Heart right ventricle (tissue), 16 donors: ENCODE measurements at regions of chr4 and their contacts with region 1.

Region 1: DNA sequence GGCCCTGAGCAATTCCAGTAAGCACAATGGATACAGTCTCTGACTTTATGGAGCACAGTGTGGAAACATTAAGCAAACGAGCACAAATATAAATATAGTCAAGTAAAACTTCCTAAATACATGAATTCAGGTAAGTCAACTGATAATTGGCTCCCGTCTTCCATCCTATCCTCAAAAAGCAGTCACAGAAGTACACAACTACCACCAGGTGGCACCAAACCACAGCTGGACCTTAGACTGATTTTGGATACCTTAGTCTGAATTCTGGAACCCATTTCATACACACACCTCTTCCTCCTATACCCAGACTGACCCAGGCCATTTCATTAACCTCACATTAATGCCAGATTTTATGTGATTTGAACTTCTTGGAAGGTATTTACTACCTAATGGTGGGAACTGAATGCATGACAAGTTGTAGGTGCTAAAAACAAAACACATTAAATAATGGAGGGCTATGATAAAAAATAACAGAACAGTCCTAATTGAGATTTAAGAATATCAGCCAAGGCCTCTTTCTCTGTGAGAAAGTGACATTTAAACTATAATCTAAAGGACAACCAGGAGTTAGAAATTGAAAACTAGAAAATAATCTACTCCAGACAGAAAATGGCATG is 77.5 kb downstream of the ELF2 start:
- DNase-seq: peak; percentile 19 to 73
- ATAC-seq: peak; percentile 50 to 89 (median 72)
- H3K4me3 ChIP-seq: no peak overlapping the region
- H3K27ac ChIP-seq: no peak overlapping the region
- H3K4me1 ChIP-seq: no peaks in the 10 kb centered on the region
- H3K27me3 ChIP-seq: no peaks in the 10 kb centered on the region
- CTCF ChIP-seq: peak; percentile 73 to 93 (median 87)

Region 2: DNA sequence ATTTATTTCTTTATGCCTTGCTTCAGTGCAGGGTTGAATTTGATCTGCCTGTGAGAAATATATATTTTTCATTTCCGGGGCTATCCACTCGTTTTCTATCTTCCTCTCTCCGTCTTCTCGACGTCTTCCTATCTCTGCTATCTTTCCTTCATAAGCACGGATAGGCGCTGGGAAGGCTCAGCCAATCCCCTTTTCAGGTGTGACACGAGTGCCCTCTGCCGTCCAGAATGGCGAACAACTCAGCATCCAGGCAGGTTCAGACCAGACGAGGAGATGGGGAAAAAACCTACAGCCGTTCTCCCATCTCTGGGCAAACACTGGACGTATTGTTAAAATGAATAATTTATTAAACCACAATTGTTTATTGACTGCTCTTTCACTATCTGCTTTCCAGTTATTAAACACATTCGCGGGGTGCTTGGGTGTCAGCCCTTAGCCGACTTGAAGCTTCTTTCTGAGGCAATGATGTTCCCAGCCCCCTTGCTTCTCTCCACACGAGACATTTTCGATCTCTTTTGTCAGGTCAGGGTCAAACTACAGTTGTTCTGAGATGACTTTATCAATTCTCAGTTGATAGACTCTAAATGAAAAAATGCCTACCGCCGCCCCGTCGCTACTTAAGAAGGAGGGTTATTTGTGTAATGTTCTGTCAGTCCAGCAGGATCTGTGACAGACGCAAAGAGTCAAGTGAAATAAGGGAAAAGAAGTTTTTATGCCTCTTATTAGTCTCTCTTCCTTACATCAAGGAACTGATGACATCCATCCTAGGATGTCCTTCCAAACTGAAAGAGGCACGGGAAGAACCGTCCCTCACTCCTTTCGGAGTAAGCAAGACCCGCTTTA is 180.2 kb before region 1 on chr4:
- intact Hi-C with region 1: loop called in 1 of 10 experiments (anchors 5 kb)
- DNase-seq: peak; percentile 60 to 76
- ATAC-seq: peak; percentile 42 to 95 (median 82)
- H3K4me3 ChIP-seq: peak overlapping the region in 2 of 10 donors; percentile 11 to 17
- H3K27ac ChIP-seq: no peak overlapping the region
- H3K4me1 ChIP-seq: peaks cover 0 to 11% (median 0%) of the 10 kb centered on the region in 9 donors
- H3K27me3 ChIP-seq: no peaks in the 10 kb centered on the region
- CTCF ChIP-seq: peak; percentile 52 to 85 (median 78)

Region 3: GRCh38 chr4:139050446-139050845 is 49.0 kb before region 1 on chr4:
- intact Hi-C with region 1: no loop called
- DNase-seq: no peak
- ATAC-seq: no peak
- H3K4me3 ChIP-seq: no peak overlapping the region
- H3K27ac ChIP-seq: peak overlapping the region in 1 of 10 donors; percentile 28
- H3K4me1 ChIP-seq: peaks cover 0 to 23% (median 14%) of the 10 kb centered on the region in 9 donors
- H3K27me3 ChIP-seq: no peaks in the 10 kb centered on the region
- CTCF ChIP-seq: no peak

Region 4: GRCh38 chr4:139167774-139168444 is 68.4 kb after region 1 on chr4:
- intact Hi-C with region 1: loop called in 7 of 10 experiments (anchors 5 to 10 kb)
- DNase-seq: no peak
- ATAC-seq: peak in 6 of 8 donors; percentile 18 to 81 (median 60)
- H3K4me3 ChIP-seq: no peak overlapping the region
- H3K27ac ChIP-seq: peak overlapping the region in 2 of 10 donors; percentile 30 to 54
- H3K4me1 ChIP-seq: peaks cover 10 to 77% (median 55%) of the 10 kb centered on the region in 9 donors
- H3K27me3 ChIP-seq: no peaks in the 10 kb centered on the region
- CTCF ChIP-seq: peak in 7 of 9 donors; percentile 34 to 58 (median 46)

Region 5: GRCh38 chr4:139229534-139230039 is 130.1 kb after region 1 on chr4:
- intact Hi-C with region 1: loop called in 2 of 10 experiments (anchors 2 to 5 kb)
- DNase-seq: peak in 1 of 2 donors; percentile 12
- ATAC-seq: peak in 5 of 8 donors; percentile 52 to 71 (median 62)
- H3K4me3 ChIP-seq: no peak overlapping the region
- H3K27ac ChIP-seq: no peak overlapping the region
- H3K4me1 ChIP-seq: no peaks in the 10 kb centered on the region
- H3K27me3 ChIP-seq: no peaks in the 10 kb centered on the region
- CTCF ChIP-seq: peak; percentile 39 to 80 (median 72)